Activated naive CD4-positive, alpha-beta T cell treated with anti-CD3 and anti-CD28 coated beads, Interleukin-2, amount 10 ng/mL, durations not matched to agents 7 days and 5 days (primary cell): ENCODE measurements at regions of chr4 and their contacts with region 1.

Region 1: GRCh38 chr4:122577808-122578781 is 42.8 kb downstream of the IL21 start:
- DNase-seq: peak; percentile 83
- H3K4me3 Mint-ChIP-seq: peak overlapping the region; percentile 60
- H3K27ac Mint-ChIP-seq: peak overlapping the region; percentile 94
- H3K4me1 Mint-ChIP-seq: peaks cover 58% of the 10 kb centered on the region
- H3K27me3 Mint-ChIP-seq: peaks cover 4% of the 10 kb centered on the region

Region 2: DNA sequence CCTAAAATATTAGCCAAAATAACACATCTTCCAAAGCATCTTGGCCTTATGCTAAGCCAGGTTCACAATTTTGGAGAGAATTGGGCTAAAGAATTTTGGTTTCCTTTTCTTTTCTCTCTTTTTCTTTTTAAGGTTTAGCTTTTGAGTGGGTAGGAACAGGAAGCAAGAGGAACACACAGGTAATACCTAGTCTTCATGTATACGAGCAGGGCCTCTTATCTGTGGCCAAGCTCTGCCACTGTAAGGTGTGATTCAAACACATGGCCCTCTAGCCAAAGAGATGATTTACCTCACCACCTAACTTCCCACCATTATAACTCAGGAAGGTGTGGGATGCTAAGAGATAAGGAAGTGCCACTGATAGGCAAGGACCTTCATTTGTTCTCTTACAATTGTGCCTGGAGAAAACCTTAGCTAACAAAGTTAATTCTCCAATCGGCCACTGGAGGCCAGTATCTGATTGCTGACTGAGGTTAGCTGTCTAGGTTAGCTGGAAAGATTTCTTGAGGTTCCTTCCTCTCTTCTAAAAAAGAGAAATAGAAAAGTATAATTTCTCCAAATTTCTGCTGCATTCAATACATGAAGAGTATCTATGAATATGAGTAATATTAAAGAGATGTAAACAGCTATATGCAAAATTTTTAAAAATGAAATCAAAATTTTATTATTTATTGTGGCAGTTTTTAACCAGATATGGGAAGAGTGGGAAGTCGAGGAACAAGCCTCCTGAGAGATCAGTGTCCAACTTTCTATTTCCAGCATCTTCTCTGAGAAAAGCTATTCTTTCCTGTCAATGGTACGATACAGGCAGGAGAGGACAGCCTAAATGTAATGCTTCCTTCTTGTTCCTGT is 677.7 kb before region 1 on chr4:
- CTCF ChIA-PET with region 1: interaction called, 44 read pairs
- DNase-seq: peak; percentile 64
- H3K4me3 Mint-ChIP-seq: no peak overlapping the region
- H3K27ac Mint-ChIP-seq: no peak overlapping the region
- H3K4me1 Mint-ChIP-seq: peaks cover 7% of the 10 kb centered on the region
- H3K27me3 Mint-ChIP-seq: no peaks in the 10 kb centered on the region

Region 3: DNA sequence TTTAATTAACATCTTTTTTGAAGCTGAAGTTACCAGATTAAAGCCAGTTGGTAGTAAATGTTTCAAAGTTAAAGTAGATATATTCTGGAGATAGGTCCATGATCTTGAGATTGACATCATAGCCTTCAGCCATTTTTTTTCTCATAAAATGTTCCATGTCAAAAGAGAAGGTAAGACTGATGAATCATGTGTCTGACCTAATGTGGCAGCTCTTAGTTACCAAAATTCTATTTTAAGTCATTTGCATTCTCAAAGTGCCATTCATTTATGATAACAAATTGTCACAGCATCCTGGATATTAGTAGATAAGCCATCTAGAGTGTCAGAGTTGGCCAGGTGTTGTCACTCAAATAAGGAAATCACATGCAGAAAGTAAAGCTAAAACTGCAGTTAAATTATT is 265.1 kb before region 1 on chr4:
- CTCF ChIA-PET with region 1: interaction called, 12 read pairs
- DNase-seq: no peak
- H3K4me3 Mint-ChIP-seq: no peak overlapping the region
- H3K27ac Mint-ChIP-seq: no peak overlapping the region
- H3K4me1 Mint-ChIP-seq: no peaks in the 10 kb centered on the region
- H3K27me3 Mint-ChIP-seq: no peaks in the 10 kb centered on the region

Region 4: DNA sequence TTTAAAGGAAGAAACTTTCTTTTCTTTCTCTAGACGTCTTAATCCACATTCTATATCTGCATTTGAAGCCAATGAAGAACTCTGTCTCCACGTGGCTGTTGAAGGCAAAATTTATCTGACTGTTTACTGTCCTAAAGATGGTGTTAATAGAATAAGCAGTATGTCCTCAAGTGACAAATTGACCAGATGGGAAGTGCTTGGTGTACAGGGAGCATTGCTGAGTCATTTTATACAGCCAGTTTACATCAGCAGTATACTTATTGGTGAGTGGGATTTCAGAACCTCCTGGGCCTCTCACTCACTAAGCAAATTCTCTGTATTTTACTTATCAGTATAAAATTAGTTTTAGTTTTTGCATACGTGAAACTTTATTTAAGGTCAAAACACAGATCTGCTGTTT is 165.5 kb before region 1 on chr4:
- CTCF ChIA-PET with region 1: no interaction called
- DNase-seq: no peak
- H3K4me3 Mint-ChIP-seq: no peak overlapping the region
- H3K27ac Mint-ChIP-seq: no peak overlapping the region
- H3K4me1 Mint-ChIP-seq: no peaks in the 10 kb centered on the region
- H3K27me3 Mint-ChIP-seq: no peaks in the 10 kb centered on the region

Region 5: GRCh38 chr4:122458625-122459024 is 119.5 kb before region 1 on chr4:
- CTCF ChIA-PET with region 1: interaction called, 29 read pairs
- DNase-seq: peak; percentile 56
- H3K4me3 Mint-ChIP-seq: peak overlapping the region; percentile 76
- H3K27ac Mint-ChIP-seq: peak overlapping the region; percentile 88
- H3K4me1 Mint-ChIP-seq: peaks cover 55% of the 10 kb centered on the region
- H3K27me3 Mint-ChIP-seq: no peaks in the 10 kb centered on the region

Region 6: GRCh38 chr4:122602277-122603142 is 24.4 kb after region 1 on chr4:
- CTCF ChIA-PET with region 1: interaction called, 26 read pairs
- DNase-seq: no peak
- H3K4me3 Mint-ChIP-seq: no peak overlapping the region
- H3K27ac Mint-ChIP-seq: no peak overlapping the region
- H3K4me1 Mint-ChIP-seq: peaks cover 12% of the 10 kb centered on the region
- H3K27me3 Mint-ChIP-seq: no peaks in the 10 kb centered on the region

Region 7: GRCh38 chr4:122930862-122931261 is 352.8 kb after region 1 on chr4:
- CTCF ChIA-PET with region 1: interaction called, 17 read pairs
- DNase-seq: no peak
- H3K4me3 Mint-ChIP-seq: no peak overlapping the region
- H3K27ac Mint-ChIP-seq: no peak overlapping the region
- H3K4me1 Mint-ChIP-seq: peaks cover 30% of the 10 kb centered on the region
- H3K27me3 Mint-ChIP-seq: no peaks in the 10 kb centered on the region

Region 8: DNA sequence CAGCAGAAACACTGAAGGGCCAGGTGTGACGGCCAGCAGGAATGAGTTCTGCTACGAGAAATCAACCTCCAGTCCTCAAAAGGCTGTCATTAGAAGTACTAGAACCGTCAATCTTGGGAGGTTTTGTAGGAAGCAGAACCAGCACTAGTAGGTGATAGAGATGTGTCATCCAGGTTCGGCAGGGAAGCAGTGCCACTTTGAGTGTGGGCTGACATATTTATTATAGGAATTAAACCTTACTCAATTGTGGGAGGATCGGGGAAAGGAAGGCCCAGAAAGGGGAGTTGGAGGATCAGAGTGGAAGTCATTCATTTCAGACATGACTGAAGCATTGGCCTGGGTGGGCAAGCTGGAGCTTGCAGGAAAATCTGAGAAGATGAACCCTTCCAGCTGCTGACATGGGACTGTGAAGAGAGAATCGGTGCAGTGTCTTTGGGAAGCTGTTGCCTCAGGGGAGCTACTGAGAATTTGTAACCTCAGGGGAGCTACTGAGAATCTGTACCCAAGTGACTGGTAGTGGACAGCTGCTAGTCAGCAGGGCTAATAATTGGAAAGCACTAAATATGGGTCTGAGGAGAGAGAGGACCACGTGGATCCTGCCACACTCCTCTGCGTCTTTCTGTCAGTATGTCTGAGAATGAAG is 995.9 kb after region 1 on chr4:
- CTCF ChIA-PET with region 1: no interaction called
- DNase-seq: no peak
- H3K4me3 Mint-ChIP-seq: no peak overlapping the region
- H3K27ac Mint-ChIP-seq: no peak overlapping the region
- H3K4me1 Mint-ChIP-seq: no peaks in the 10 kb centered on the region
- H3K27me3 Mint-ChIP-seq: peaks cover 5% of the 10 kb centered on the region